ENCODE measurements at regions of chr17 and their contacts with region 1.

Region 1: GRCh38 chr17:57311281-57312216 is 55.2 kb downstream of the MSI2 start:
- DNase-seq: no peak
- ATAC-seq: peak in 1 of 4 donors; percentile 13
- H3K4me3 ChIP-seq: no peak overlapping the region
- H3K27ac ChIP-seq: no peak overlapping the region
- H3K4me1 ChIP-seq: peaks cover 46% of the 10 kb centered on the region
- H3K27me3 ChIP-seq: no peaks in the 10 kb centered on the region
- CTCF ChIP-seq: no peak

Region 2: DNA sequence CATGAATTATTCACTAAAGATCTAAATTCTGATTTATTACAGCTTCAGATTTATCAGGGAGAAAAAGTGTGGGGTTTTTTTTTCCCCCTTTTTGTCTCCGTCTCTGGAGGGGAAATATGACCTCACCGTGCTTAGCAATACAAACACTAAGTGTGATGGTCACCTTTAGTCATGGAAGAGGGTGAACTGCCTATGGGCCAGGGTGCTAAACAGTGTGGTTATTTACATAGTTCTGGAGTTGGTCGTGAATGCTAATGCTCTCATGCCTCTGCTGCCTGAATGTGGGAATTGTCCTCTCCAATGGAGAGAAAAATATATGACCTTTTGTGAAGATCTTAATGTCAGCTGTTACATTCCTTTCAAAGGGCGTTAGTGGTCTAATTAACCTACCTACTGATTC is 100.0 kb before region 1 on chr17:
- intact Hi-C with region 1: no loop called
- DNase-seq: no peak
- ATAC-seq: no peak
- H3K4me3 ChIP-seq: no peak overlapping the region
- H3K27ac ChIP-seq: no peak overlapping the region
- H3K4me1 ChIP-seq: no peaks in the 10 kb centered on the region
- H3K27me3 ChIP-seq: no peaks in the 10 kb centered on the region
- CTCF ChIP-seq: no peak

Region 3: GRCh38 chr17:57349541-57350247 is 38.1 kb after region 1 on chr17:
- intact Hi-C with region 1: loop called in 1 of 2 experiments (anchors 5 kb)
- DNase-seq: no peak
- ATAC-seq: no peak
- H3K4me3 ChIP-seq: no peak overlapping the region
- H3K27ac ChIP-seq: no peak overlapping the region
- H3K4me1 ChIP-seq: peaks cover 36% of the 10 kb centered on the region
- H3K27me3 ChIP-seq: no peaks in the 10 kb centered on the region
- CTCF ChIP-seq: no peak